Activated naive CD4-positive, alpha-beta T cell treated with anti-CD3 and anti-CD28 coated beads for 36 hours (primary cell): ENCODE measurements at regions of chr15 and their contacts with region 1.

Region 1: GRCh38 chr15:31440754-31441311 is 114.2 kb downstream of the KLF13 start:
- DNase-seq: peak; percentile 40
- H3K4me3 Mint-ChIP-seq: peak overlapping the region; percentile 64
- H3K27ac Mint-ChIP-seq: no peak overlapping the region
- H3K4me1 Mint-ChIP-seq: peaks cover 50% of the 10 kb centered on the region
- H3K27me3 Mint-ChIP-seq: no peaks in the 10 kb centered on the region

Region 2: DNA sequence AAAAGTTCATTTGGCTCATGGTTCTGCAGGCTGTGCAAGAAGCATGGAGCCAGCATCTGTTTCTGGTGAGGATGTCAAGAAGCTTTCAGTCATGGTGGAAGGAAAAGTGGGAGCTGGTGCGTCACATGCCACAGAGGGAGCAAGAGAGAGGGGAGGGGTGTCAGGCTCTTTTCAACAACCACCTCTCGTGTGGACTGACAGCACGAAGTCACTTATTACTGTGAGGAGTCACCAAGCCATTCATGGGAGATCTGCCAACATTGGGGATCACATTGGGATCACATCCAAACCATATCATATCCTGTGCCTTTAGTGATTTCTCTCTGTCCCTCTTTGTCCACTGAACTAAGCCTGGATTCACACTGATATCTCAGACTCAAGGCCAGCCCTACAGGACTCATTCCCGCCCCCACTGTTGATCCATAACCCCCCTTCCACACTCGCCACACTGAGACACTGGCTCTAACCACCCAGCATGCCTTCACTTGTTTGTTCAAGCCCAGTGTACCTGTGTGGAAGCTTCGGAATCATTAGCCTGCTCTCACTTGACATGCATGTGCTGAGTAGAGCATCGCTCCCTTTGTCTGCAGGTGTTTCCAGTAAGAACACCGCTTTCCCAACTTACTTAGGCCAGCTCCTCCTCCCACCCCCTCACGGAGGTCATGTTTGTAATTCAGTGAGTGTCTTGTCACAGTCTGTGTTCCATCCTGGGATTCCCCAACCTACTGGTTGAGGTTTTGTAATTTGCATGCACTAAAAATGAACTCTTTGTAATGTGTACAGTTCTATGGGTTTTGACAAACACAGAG is 18.0 kb after region 1 on chr15:
- CTCF ChIA-PET with region 1: interaction called, 62 read pairs
- intact Hi-C with region 1: no loop called
- DNase-seq: peak; percentile 86
- H3K4me3 Mint-ChIP-seq: peak overlapping the region; percentile 57
- H3K27ac Mint-ChIP-seq: peak overlapping the region; percentile 87
- H3K4me1 Mint-ChIP-seq: peaks cover 37% of the 10 kb centered on the region
- H3K27me3 Mint-ChIP-seq: no peaks in the 10 kb centered on the region

Region 3: GRCh38 chr15:31483053-31483985 is 42.5 kb after region 1 on chr15:
- CTCF ChIA-PET with region 1: interaction called, 348 read pairs
- intact Hi-C with region 1: loop called (anchors 1 kb)
- DNase-seq: peak; percentile 63
- H3K4me3 Mint-ChIP-seq: peak overlapping the region; percentile 92
- H3K27ac Mint-ChIP-seq: peak overlapping the region; percentile 91
- H3K4me1 Mint-ChIP-seq: peaks cover 33% of the 10 kb centered on the region
- H3K27me3 Mint-ChIP-seq: no peaks in the 10 kb centered on the region